HEK293 (cell line): ENCODE measurements at regions of chr5 and their contacts with region 1.

Region 1: GRCh38 chr5:160390787-160391696 is 8.8 kb downstream of the FAM200C start:
- H3K4me3 ChIP-seq: no peak overlapping the region
- H3K27ac ChIP-seq: no peak overlapping the region
- H3K4me1 ChIP-seq: no peaks in the 10 kb centered on the region
- CTCF ChIP-seq: no peak

Region 2: GRCh38 chr5:160379511-160379910 is 11.5 kb before region 1 on chr5:
- CTCF ChIA-PET with region 1: interaction called, 12 read pairs
- POLR2A ChIA-PET with region 1: interaction called, 8 read pairs
- H3K4me3 ChIP-seq: no peak overlapping the region
- H3K27ac ChIP-seq: no peak overlapping the region
- H3K4me1 ChIP-seq: no peaks in the 10 kb centered on the region
- CTCF ChIP-seq: no peak